Adrenal gland (tissue), 19 donors: ENCODE measurements at regions of chr7 and their contacts with region 1.

Region 1: GRCh38 chr7:20440472-20441105 is 109.9 kb downstream of the ITGB8 start:
- DNase-seq: peak in 4 of 7 donors; percentile 26 to 51 (median 35)
- H3K4me3 ChIP-seq: no peak overlapping the region
- H3K27ac ChIP-seq: no peak overlapping the region
- H3K4me1 ChIP-seq: peaks cover 0 to 3% of the 10 kb centered on the region in 2 donors
- H3K27me3 ChIP-seq: no peaks in the 10 kb centered on the region
- CTCF ChIP-seq: peak in 5 of 6 experiments; percentile 9 to 40 (median 38)
- POLR2A ChIP-seq: no peak

Region 2: GRCh38 chr7:19708397-19709248 is 732.0 kb before region 1 on chr7 and contains the start of gene POLR1F:
- intact Hi-C with region 1: no loop called
- DNase-seq: peak; percentile 93 to 98 (median 96)
- H3K4me3 ChIP-seq: peak within 1 kb of the TSS in 3 of 4 donors; percentile 74 to 96 (median 96)
- H3K27ac ChIP-seq: peak within 1 kb of the TSS in 3 of 5 donors; percentile 58 to 75 (median 65)
- H3K4me1 ChIP-seq: peaks cover 5 to 24% of the 10 kb centered on the region in 2 donors
- H3K27me3 ChIP-seq: no peaks in the 10 kb centered on the region
- CTCF ChIP-seq: peak; percentile 73 to 94 (median 88)
- POLR2A ChIP-seq: peak; percentile 84 to 88
- total RNA-seq, gene POLR1F: 6.9 to 27.9 (median 12.5) TPM

Region 3: DNA sequence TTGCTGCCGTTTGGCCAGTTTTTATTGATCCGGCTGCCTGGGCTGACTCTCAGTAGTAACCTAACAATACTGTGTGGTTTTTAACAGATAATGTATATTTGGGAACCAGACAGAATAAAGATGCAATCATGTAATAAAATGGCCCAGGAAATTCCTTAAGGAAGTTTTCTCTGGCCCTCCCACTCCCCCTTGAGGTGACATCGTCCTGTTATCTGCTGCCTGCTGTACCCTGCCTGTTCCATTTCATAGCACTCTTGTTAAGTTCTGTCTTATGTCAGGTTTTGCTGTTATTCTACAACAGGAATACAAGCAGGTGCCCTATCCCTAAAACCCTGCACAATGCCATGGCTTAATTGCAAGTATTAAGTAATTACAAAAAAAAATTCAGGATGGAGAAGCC is 97.4 kb before region 1 on chr7:
- intact Hi-C with region 1: no loop called
- DNase-seq: no peak
- H3K4me3 ChIP-seq: no peak overlapping the region
- H3K27ac ChIP-seq: no peak overlapping the region
- H3K4me1 ChIP-seq: no peaks in the 10 kb centered on the region
- H3K27me3 ChIP-seq: no peaks in the 10 kb centered on the region
- CTCF ChIP-seq: peak in 1 of 6 experiments; percentile 11
- POLR2A ChIP-seq: no peak

Region 4: GRCh38 chr7:20508109-20508508 is 67.5 kb after region 1 on chr7:
- intact Hi-C with region 1: loop called in 1 of 2 experiments (anchors 10 kb)
- DNase-seq: peak in 2 of 7 donors; percentile 12 to 25
- H3K4me3 ChIP-seq: no peak overlapping the region
- H3K27ac ChIP-seq: no peak overlapping the region
- H3K4me1 ChIP-seq: no peaks in the 10 kb centered on the region
- H3K27me3 ChIP-seq: no peaks in the 10 kb centered on the region
- CTCF ChIP-seq: no peak
- POLR2A ChIP-seq: no peak

Region 5: DNA sequence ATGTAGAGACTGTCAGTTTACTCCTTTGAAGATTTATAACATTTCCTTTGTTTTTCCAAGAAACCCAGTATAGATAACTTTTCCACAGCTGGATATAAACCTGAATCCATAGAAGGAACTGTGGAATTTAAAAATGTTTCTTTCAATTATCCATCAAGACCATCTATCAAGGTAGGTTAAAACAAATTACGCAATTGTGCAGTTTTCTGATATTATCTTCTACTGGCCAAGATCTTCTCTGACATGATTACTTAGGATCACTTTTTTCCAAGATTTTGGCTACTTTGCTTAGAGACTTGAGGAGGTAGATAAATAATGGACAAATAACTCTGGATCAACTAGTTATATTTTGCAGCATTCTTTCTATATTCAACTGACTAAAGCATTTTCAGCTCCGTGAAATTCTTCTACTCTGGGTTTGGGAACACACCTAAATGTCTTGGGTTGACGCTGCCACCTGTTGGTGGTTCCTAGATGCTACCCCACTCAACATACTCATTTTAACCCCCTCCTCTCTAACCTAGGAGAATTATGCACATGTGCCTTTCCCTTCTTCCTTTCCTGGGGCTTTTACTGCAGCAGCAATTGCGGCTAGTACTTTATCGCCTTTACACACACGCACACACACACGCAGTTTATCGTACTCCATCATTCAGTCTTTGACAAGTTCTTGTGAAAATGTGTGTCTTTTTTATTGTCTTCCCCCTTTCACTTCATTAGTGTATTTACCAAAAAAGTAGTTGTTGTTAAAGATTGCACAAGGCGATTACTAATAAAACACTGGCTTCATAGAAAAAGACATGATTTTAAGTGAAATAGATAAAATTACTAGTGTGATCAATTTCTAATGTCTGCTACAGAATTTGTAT is 207.6 kb after region 1 on chr7:
- intact Hi-C with region 1: no loop called
- DNase-seq: no peak
- H3K4me3 ChIP-seq: no peak overlapping the region
- H3K27ac ChIP-seq: no peak overlapping the region
- H3K4me1 ChIP-seq: no peaks in the 10 kb centered on the region
- H3K27me3 ChIP-seq: peaks cover 3% of the 10 kb centered on the region
- CTCF ChIP-seq: peak in 2 of 6 experiments; percentile 3 to 15
- POLR2A ChIP-seq: no peak